ENCODE measurements at regions of chr2 and their contacts with region 1.

Region 1: DNA sequence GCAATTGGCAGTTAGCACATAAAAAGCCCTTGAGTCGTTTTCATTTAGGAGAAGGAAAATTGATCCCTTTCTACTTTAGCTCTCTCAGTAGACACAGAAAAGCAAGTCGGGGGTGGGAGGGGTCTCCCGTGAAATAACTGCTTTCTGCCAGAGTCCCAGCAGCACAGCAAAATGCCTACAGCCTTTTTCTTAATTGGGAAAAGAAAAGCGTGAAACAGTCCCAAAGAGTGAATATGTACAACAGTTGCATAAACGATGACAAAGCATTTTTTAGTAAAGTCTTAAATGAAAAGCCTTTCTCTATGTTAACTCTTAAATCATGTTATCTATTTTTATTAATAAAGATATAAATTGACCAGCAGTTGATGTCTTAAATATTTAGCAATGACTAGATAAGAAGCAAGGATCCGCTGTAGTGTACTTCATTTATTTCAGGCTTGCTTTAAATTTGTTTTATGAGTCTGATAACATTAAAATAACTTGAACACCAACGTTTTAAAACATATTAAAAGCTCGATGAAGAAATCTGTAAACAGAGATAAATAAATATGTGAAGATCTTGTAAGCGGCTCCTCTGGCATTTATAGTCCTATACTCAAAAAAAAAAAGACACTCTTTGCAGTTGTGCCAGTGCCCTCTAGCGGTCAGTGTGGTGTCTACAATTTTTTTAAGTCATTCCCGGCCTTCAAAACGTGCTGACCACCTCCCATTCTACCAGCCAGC is 42.3 kb upstream of the ATIC start:
- DNase-seq: peak; percentile 43 to 52 (median 51)
- H3K4me3 ChIP-seq: no peak overlapping the region
- H3K4me3 Mint-ChIP-seq: no peak overlapping the region
- H3K27ac ChIP-seq: no peak overlapping the region
- H3K27ac Mint-ChIP-seq: no peak overlapping the region
- H3K4me1 ChIP-seq: no peaks in the 10 kb centered on the region
- H3K4me1 Mint-ChIP-seq: peaks cover 0 to 2% (median under 1%) of the 10 kb centered on the region in 4 donors
- H3K27me3 ChIP-seq: no peaks in the 10 kb centered on the region
- H3K27me3 Mint-ChIP-seq: peaks cover 3 to 5% of the 10 kb centered on the region in 2 donors

Region 2: GRCh38 chr2:215186021-215186420 is 83.5 kb before region 1 on chr2:
- CTCF ChIA-PET with region 1: no interaction called
- POLR2A ChIA-PET with region 1: no interaction called
- intact Hi-C with region 1: no loop called
- DNase-seq: no peak
- H3K4me3 ChIP-seq: no peak overlapping the region
- H3K4me3 Mint-ChIP-seq: no peak overlapping the region
- H3K27ac ChIP-seq: no peak overlapping the region
- H3K27ac Mint-ChIP-seq: no peak overlapping the region
- H3K4me1 ChIP-seq: no peaks in the 10 kb centered on the region
- H3K4me1 Mint-ChIP-seq: no peaks in the 10 kb centered on the region
- H3K27me3 ChIP-seq: no peaks in the 10 kb centered on the region
- H3K27me3 Mint-ChIP-seq: peaks cover 8% of the 10 kb centered on the region in 2 donors

Region 3: GRCh38 chr2:215311625-215312396 is 42.3 kb after region 1 on chr2 and contains the start of gene ATIC:
- CTCF ChIA-PET with region 1: interaction called, 3 read pairs
- POLR2A ChIA-PET with region 1: no interaction called
- intact Hi-C with region 1: loop called (anchors 2 kb)
- DNase-seq: peak; percentile 84 to 90 (median 87)
- H3K4me3 ChIP-seq: peak within 1 kb of the TSS; percentile 63 to 93
- H3K4me3 Mint-ChIP-seq: peak within 1 kb of the TSS; percentile 93 to 98 (median 96)
- H3K27ac ChIP-seq: peak within 1 kb of the TSS; percentile 75
- H3K27ac Mint-ChIP-seq: peak within 1 kb of the TSS; percentile 89 to 97 (median 94)
- H3K4me1 ChIP-seq: peaks cover 25% of the 10 kb centered on the region
- H3K4me1 Mint-ChIP-seq: peaks cover 28 to 44% (median 39%) of the 10 kb centered on the region in 4 donors
- H3K27me3 ChIP-seq: no peaks in the 10 kb centered on the region
- H3K27me3 Mint-ChIP-seq: no peaks in the 10 kb centered on the region
- total RNA-seq, gene ATIC: 85.1 to 87.1 TPM

Region 4: DNA sequence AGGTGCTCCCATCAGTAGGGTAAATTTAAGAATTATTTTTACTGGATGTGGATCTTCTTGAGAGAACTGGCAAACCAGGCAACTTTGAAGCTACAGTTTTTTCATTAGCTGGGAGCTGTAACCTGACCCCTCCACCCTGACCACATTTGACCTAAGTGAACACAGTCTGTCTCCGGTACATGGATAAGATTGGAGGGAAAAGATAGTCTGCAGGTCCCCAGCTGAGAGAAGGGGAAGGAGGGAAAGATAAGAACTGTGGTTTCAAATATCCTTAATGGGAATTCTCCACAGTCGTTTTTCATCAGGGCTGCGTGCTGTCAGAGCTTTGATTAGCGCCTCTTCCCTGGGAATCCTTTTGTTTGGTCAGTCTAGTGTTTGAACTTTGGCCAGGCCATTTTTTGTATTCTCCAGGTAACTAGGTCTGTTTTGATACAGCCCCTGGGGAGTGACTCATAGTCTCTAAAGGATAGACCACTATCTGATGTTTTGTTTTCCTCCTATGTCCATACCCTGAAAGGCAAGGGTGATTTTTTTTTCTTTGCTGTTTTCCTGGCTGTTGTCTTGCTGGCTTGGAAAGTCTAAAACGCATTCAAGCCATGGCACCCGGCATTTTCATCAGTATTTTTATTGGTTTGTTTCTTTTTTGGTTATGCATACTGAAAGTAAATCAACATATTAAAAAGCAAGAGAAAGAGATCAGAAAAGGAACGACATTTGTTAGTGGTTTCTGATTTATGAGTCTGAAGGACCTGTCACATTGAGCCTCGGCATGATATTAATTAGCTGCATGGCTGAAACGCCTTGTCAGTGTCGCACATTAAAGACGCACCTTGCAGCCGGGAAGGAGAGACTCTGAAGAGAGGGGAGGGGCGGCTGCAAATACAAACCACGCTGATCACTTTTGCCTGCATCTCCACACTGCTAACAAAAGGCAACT is 349.7 kb after region 1 on chr2:
- CTCF ChIA-PET with region 1: no interaction called
- POLR2A ChIA-PET with region 1: no interaction called
- intact Hi-C with region 1: no loop called
- DNase-seq: no peak
- H3K4me3 ChIP-seq: no peak overlapping the region
- H3K4me3 Mint-ChIP-seq: peak overlapping the region in 2 of 8 donors; percentile 63 to 67
- H3K27ac ChIP-seq: no peak overlapping the region
- H3K27ac Mint-ChIP-seq: no peak overlapping the region
- H3K4me1 ChIP-seq: no peaks in the 10 kb centered on the region
- H3K4me1 Mint-ChIP-seq: peaks cover 0 to 5% (median 1%) of the 10 kb centered on the region in 4 donors
- H3K27me3 ChIP-seq: no peaks in the 10 kb centered on the region
- H3K27me3 Mint-ChIP-seq: peaks cover 0 to 5% of the 10 kb centered on the region in 2 donors

Region 5: GRCh38 chr2:215920244-215921100 is 650.9 kb after region 1 on chr2:
- CTCF ChIA-PET with region 1: interaction called, 3 read pairs
- POLR2A ChIA-PET with region 1: no interaction called
- intact Hi-C with region 1: loop called (anchors 5 kb)
- DNase-seq: peak; percentile 43 to 50 (median 46)
- H3K4me3 ChIP-seq: no peak overlapping the region
- H3K4me3 Mint-ChIP-seq: no peak overlapping the region
- H3K27ac ChIP-seq: no peak overlapping the region
- H3K27ac Mint-ChIP-seq: no peak overlapping the region
- H3K4me1 ChIP-seq: no peaks in the 10 kb centered on the region
- H3K4me1 Mint-ChIP-seq: no peaks in the 10 kb centered on the region
- H3K27me3 ChIP-seq: no peaks in the 10 kb centered on the region
- H3K27me3 Mint-ChIP-seq: peaks cover 4 to 8% of the 10 kb centered on the region in 2 donors

Measured in CD4-positive, alpha-beta memory T cell (primary cell).